Activated CD4-positive, alpha-beta memory T cell treated with anti-CD3 and anti-CD28 coated beads, Interleukin-2, amount 10 ng/mL, durations not matched to agents 7 days and 5 days (primary cell): ENCODE measurements at regions of chr5 and their contacts with region 1.

Region 1: GRCh38 chr5:151223469-151224264 is at the start of gene CCDC69:
- DNase-seq: peak; percentile 67
- H3K4me3 Mint-ChIP-seq: peak within 1 kb of the TSS; percentile 78
- H3K27ac Mint-ChIP-seq: peak within 1 kb of the TSS; percentile 85
- H3K4me1 Mint-ChIP-seq: peaks cover 55% of the 10 kb centered on the region
- H3K27me3 Mint-ChIP-seq: no peaks in the 10 kb centered on the region
- total RNA-seq, gene CCDC69: 62.6 to 64.2 TPM

Region 2: DNA sequence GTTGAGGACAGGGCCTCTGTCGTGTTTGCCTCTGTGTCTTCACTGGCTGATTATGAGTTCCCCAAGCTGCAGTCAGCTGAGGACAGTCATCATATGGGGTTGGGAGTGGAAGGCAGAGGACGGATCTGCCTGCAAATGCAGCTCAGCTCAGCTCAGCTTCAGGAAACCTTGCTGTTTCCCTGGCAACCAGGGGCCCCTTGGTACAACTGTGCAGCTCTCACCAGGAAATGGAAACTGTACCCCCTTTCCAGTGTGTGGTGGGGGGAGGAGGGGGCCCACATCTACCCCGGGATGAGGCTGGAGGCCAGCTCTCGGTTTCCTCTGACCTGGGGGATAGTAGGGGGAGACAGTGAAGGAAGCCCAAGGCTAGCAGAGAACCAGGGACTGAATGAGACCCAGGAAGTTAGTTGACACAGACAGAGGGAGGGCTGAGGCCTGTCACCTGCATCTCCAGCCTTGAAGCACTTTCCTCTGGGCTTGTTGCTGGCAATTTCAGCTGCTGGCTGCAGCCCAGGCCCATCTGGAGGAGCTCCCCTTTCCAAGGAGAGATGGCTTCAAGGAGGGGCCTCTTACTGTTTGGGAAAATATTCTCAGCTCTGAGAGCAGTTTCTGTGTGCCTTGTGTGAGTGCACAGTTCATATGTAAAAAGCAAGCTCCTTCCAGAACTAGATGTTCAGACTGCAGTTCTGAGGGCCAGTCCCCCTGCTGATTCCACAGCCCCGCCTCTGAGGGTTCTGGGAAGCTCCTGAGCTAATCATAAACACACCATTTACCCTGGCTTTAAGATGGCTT is 73.0 kb before region 1 on chr5:
- CTCF ChIA-PET with region 1: no interaction called
- POLR2A ChIA-PET with region 1: interaction called, 10 read pairs
- DNase-seq: peak; percentile 83
- H3K4me3 Mint-ChIP-seq: peak overlapping the region; percentile 50
- H3K27ac Mint-ChIP-seq: peak overlapping the region; percentile 96
- H3K4me1 Mint-ChIP-seq: peaks cover 95% of the 10 kb centered on the region
- H3K27me3 Mint-ChIP-seq: no peaks in the 10 kb centered on the region

Region 3: GRCh38 chr5:151239237-151239861 is 15.7 kb after region 1 on chr5:
- CTCF ChIA-PET with region 1: interaction called, 26 read pairs
- POLR2A ChIA-PET with region 1: interaction called, 12 read pairs
- DNase-seq: peak; percentile 52
- H3K4me3 Mint-ChIP-seq: no peak overlapping the region
- H3K27ac Mint-ChIP-seq: no peak overlapping the region
- H3K4me1 Mint-ChIP-seq: peaks cover 40% of the 10 kb centered on the region
- H3K27me3 Mint-ChIP-seq: no peaks in the 10 kb centered on the region

Region 4: GRCh38 chr5:151328734-151329133 is 105.1 kb after region 1 on chr5:
- CTCF ChIA-PET with region 1: no interaction called
- POLR2A ChIA-PET with region 1: no interaction called
- DNase-seq: no peak
- H3K4me3 Mint-ChIP-seq: no peak overlapping the region
- H3K27ac Mint-ChIP-seq: no peak overlapping the region
- H3K4me1 Mint-ChIP-seq: no peaks in the 10 kb centered on the region
- H3K27me3 Mint-ChIP-seq: no peaks in the 10 kb centered on the region